ENCODE measurements at regions of chr11 and their contacts with region 1.

Region 1: GRCh38 chr11:45147017-45147728 is 734 bp downstream of the PRDM11 start:
- DNase-seq: peak; percentile 86 to 93 (median 91)
- ATAC-seq: peak; percentile 98
- H3K4me3 ChIP-seq: peak overlapping the region; percentile 68
- H3K4me3 Mint-ChIP-seq: peak overlapping the region; percentile 85 to 95 (median 92)
- H3K27ac ChIP-seq: peak overlapping the region; percentile 79
- H3K27ac Mint-ChIP-seq: peak overlapping the region; percentile 47 to 95 (median 87)
- H3K4me1 ChIP-seq: peaks cover 13 to 14% of the 10 kb centered on the region in 2 donors
- H3K4me1 Mint-ChIP-seq: peaks cover 13 to 47% (median 43%) of the 10 kb centered on the region in 7 donors
- H3K27me3 ChIP-seq: no peaks in the 10 kb centered on the region
- H3K27me3 Mint-ChIP-seq: peaks cover 4 to 45% (median 10%) of the 10 kb centered on the region in 5 donors

Region 2: DNA sequence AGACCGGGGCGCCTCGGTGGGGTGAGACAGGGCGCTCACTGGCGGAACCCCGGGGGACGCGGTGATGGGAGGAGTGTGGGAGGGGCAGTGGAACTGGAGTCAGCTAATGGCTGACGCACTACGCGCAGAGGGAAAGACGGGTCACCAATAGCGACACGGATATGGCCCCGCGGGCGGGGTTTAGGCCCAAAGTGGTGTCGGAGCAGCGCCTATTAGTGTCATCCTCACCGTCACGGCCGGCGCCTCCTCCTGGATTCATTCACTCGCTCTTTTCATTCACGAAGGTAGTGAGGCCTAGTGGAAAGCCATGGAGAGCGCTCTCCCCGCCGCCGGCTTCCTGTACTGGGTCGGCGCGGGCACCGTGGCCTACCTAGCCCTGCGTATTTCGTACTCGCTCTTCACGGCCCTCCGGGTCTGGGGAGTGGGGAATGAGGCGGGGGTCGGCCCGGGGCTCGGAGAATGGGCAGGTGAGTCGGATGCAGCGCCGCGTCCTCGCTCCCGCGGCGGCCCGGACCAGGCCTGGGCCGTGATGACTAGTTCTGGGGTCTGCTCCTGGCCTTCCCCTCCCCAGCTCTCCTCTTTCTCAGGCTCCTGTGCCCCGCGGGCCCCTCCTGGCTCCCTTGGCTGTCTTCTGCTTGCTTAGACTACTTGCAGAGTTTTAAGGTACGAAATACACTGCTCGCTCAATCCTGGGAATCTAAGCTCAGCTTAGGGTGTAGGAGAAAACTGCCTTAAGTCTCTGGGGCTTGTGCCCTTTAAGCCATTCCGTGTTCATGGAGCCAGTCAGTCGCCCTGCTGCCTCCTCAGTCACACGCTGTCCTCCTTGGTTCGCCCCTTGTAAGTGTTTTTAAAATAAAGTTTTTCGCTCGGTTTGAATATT is 1466.4 kb before region 1 on chr11 and contains the start of gene HSD17B12:
- CTCF ChIA-PET with region 1: no interaction called
- POLR2A ChIA-PET with region 1: no interaction called
- intact Hi-C with region 1: loop called in 1 of 2 experiments (anchors 10 kb)
- DNase-seq: peak; percentile 91 to 100 (median 99)
- ATAC-seq: peak; percentile 99
- H3K4me3 ChIP-seq: peak within 1 kb of the TSS; percentile 81
- H3K4me3 Mint-ChIP-seq: peak within 1 kb of the TSS; percentile 85 to 99 (median 96)
- H3K27ac ChIP-seq: peak within 1 kb of the TSS; percentile 89
- H3K27ac Mint-ChIP-seq: peak within 1 kb of the TSS; percentile 84 to 98 (median 97)
- H3K4me1 ChIP-seq: peaks cover 4 to 8% of the 10 kb centered on the region in 2 donors
- H3K4me1 Mint-ChIP-seq: peaks cover 11 to 59% (median 43%) of the 10 kb centered on the region in 7 donors
- H3K27me3 ChIP-seq: no peaks in the 10 kb centered on the region
- H3K27me3 Mint-ChIP-seq: peaks cover 0 to 14% (median 2%) of the 10 kb centered on the region in 5 donors
- total RNA-seq, gene HSD17B12: 21.1 to 39.5 (median 24.7) TPM

Region 3: DNA sequence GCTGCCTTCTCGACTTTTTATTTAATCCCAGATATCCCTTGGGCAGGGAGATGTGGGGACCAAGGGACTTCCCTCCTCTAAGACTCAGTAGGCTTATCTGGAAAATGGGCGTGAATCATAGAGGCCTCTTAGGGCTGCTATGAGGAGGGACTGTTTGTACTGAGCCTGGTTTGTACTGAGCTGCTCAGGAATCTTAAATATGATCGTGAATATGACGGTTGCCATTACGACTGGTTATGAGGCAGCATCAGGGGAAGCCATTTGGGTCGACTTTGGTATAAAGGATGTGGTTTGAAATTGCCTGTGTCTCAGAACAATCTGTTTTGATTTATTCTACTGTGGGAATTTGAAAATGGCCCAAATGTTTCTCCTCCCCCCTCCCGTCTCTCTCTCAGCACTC is 399.9 kb before region 1 on chr11:
- CTCF ChIA-PET with region 1: no interaction called
- POLR2A ChIA-PET with region 1: no interaction called
- intact Hi-C with region 1: loop called in 1 of 2 experiments (anchors 1 kb)
- DNase-seq: peak in 6 of 9 donors; percentile 41 to 68 (median 60)
- ATAC-seq: peak; percentile 76
- H3K4me3 ChIP-seq: no peak overlapping the region
- H3K4me3 Mint-ChIP-seq: peak overlapping the region in 9 of 10 donors; percentile 26 to 83 (median 70)
- H3K27ac ChIP-seq: peak overlapping the region; percentile 56
- H3K27ac Mint-ChIP-seq: peak overlapping the region in 8 of 9 donors; percentile 73 to 87 (median 82)
- H3K4me1 ChIP-seq: peaks cover 0 to 35% of the 10 kb centered on the region in 2 donors
- H3K4me1 Mint-ChIP-seq: peaks cover 10 to 95% (median 84%) of the 10 kb centered on the region in 7 donors
- H3K27me3 ChIP-seq: no peaks in the 10 kb centered on the region
- H3K27me3 Mint-ChIP-seq: no peaks in the 10 kb centered on the region

Region 4: DNA sequence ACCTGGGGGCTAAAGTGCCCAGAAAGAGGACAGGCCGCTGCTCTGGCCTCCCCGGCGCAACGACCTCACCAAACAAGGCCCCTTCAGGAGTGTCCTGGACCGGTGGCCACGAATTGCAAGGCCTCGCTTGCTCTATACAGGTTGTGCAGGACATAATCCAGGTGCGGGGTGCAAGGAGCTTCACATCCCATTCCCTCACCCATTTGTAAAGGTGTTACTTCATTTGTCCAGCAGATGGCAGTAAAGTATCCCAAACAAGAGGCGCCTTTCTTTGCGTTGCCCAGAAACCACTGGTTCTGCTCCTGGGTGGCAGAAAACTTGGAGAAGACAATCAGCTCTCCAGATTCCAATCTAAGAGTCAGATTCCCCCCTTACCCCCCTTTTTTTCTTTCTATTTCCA is 36.6 kb before region 1 on chr11:
- CTCF ChIA-PET with region 1: interaction called, 3 read pairs
- POLR2A ChIA-PET with region 1: interaction called, 3 read pairs
- intact Hi-C with region 1: loop called in 1 of 2 experiments (anchors 2 kb)
- DNase-seq: peak in 7 of 9 donors; percentile 41 to 73 (median 59)
- ATAC-seq: peak; percentile 78
- H3K4me3 ChIP-seq: no peak overlapping the region
- H3K4me3 Mint-ChIP-seq: no peak overlapping the region
- H3K27ac ChIP-seq: no peak overlapping the region
- H3K27ac Mint-ChIP-seq: no peak overlapping the region
- H3K4me1 ChIP-seq: no peaks in the 10 kb centered on the region
- H3K4me1 Mint-ChIP-seq: no peaks in the 10 kb centered on the region
- H3K27me3 ChIP-seq: peaks cover 3 to 5% of the 10 kb centered on the region in 2 donors
- H3K27me3 Mint-ChIP-seq: peaks cover 25 to 55% (median 43%) of the 10 kb centered on the region in 5 donors

Region 5: GRCh38 chr11:45225277-45225676 is 78.1 kb after region 1 on chr11:
- CTCF ChIA-PET with region 1: no interaction called
- POLR2A ChIA-PET with region 1: no interaction called
- intact Hi-C with region 1: no loop called
- DNase-seq: no peak
- ATAC-seq: no peak
- H3K4me3 ChIP-seq: no peak overlapping the region
- H3K4me3 Mint-ChIP-seq: no peak overlapping the region
- H3K27ac ChIP-seq: no peak overlapping the region
- H3K27ac Mint-ChIP-seq: no peak overlapping the region
- H3K4me1 ChIP-seq: no peaks in the 10 kb centered on the region
- H3K4me1 Mint-ChIP-seq: no peaks in the 10 kb centered on the region
- H3K27me3 ChIP-seq: no peaks in the 10 kb centered on the region
- H3K27me3 Mint-ChIP-seq: no peaks in the 10 kb centered on the region

Region 6: GRCh38 chr11:45804761-45805304 is 657.7 kb after region 1 on chr11 and contains the start of gene SLC35C1:
- CTCF ChIA-PET with region 1: no interaction called
- POLR2A ChIA-PET with region 1: no interaction called
- intact Hi-C with region 1: loop called in 1 of 2 experiments (anchors 1 kb)
- DNase-seq: peak; percentile 89 to 97 (median 93)
- ATAC-seq: peak; percentile 99
- H3K4me3 ChIP-seq: peak within 1 kb of the TSS; percentile 95
- H3K4me3 Mint-ChIP-seq: peak within 1 kb of the TSS; percentile 86 to 99 (median 92)
- H3K27ac ChIP-seq: peak within 1 kb of the TSS; percentile 87
- H3K27ac Mint-ChIP-seq: peak within 1 kb of the TSS; percentile 61 to 94 (median 91)
- H3K4me1 ChIP-seq: peaks cover 27 to 29% of the 10 kb centered on the region in 2 donors
- H3K4me1 Mint-ChIP-seq: peaks cover 31 to 43% (median 40%) of the 10 kb centered on the region in 7 donors
- H3K27me3 ChIP-seq: no peaks in the 10 kb centered on the region
- H3K27me3 Mint-ChIP-seq: no peaks in the 10 kb centered on the region
- total RNA-seq, gene SLC35C1: 7.9 to 22.8 (median 14.2) TPM

Measured in naive thymus-derived CD4-positive, alpha-beta T cell (primary cell).